Lower leg skin (tissue), 4 donors: ENCODE measurements at regions of chr9 and their contacts with region 1.

Region 1: DNA sequence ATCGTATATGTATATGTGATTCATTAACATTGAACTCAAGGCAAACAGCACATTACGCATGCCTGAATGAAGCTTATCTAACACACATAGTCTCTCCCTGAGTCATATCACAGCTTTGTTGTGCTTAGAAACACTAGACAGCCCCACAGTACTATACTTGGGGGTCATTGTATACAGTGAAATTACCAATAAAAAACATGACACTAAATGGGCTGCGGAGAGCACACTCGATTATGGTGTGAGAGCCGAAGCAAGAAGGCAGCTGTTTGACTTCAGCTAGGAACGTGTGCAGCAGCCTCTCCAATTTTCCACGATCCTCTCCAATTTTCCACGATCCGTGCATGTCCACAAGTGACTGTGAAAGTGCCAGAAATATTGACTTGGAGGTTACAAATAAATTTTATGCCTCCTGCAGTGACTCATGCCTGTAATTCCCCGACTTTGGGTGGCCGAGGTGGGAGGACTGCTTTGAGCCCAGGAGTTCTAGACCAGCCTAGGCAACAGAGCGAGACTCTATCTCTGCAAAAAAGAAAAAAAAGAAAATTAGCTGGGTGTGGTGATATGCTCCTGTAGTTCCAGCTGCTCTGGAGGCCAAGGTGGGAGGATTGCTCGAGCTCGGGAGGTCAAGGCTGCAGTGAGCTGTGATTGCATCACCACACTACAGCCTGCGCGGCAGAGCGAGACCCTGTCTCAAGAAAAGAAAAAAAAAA is 102.4 kb downstream of the DAPK1 start:
- DNase-seq: no peak
- H3K4me3 ChIP-seq: no peak overlapping the region
- CTCF ChIP-seq: no peak
- POLR2A ChIP-seq: no peak

Region 2: GRCh38 chr9:86454661-86455615 is 1145.1 kb before region 1 on chr9:
- intact Hi-C with region 1: loop called (anchors 10 kb)
- DNase-seq: no peak
- H3K4me3 ChIP-seq: no peak overlapping the region
- CTCF ChIP-seq: no peak
- POLR2A ChIP-seq: no peak

Region 3: DNA sequence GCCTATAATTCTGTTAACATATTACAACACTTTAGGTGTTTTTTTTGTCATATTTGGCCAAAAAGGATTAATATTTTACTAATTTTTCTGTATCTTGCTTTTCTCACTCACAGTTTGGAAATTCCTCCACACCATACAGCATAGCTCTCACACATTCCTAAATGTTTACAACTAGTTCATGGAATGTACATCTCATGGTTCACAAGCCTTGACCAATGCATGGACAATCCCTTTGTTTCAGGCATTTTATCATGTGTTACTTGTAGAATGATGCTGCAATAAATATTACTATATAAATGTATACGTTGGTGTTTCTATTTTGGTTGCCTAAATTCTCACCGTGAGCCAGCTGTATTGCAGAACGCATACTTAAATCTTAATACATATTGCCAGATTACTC is 618.7 kb after region 1 on chr9:
- intact Hi-C with region 1: no loop called
- DNase-seq: no peak
- H3K4me3 ChIP-seq: no peak overlapping the region
- CTCF ChIP-seq: no peak
- POLR2A ChIP-seq: no peak

Region 4: GRCh38 chr9:88658311-88658822 is 1058.3 kb after region 1 on chr9:
- intact Hi-C with region 1: loop called (anchors 5 kb)
- DNase-seq: peak in 1 of 2 donors; percentile 44
- H3K4me3 ChIP-seq: no peak overlapping the region
- CTCF ChIP-seq: no peak
- POLR2A ChIP-seq: no peak